ENCODE measurements at regions of chr20 and their contacts with region 1.

Region 1: GRCh38 chr20:52601295-52601971 is 370.7 kb upstream of the TSHZ2 start:
- DNase-seq: peak in 1 of 2 donors; percentile 37
- ATAC-seq: peak in 1 of 2 donors; percentile 54
- H3K4me3 ChIP-seq: no peak overlapping the region
- H3K27ac ChIP-seq: no peak overlapping the region
- H3K4me1 ChIP-seq: no peaks in the 10 kb centered on the region
- H3K27me3 ChIP-seq: no peaks in the 10 kb centered on the region
- CTCF ChIP-seq: no peak
- POLR2A ChIP-seq: no peak

Region 2: GRCh38 chr20:52457826-52458225 is 143.6 kb before region 1 on chr20:
- in situ Hi-C with region 1: no loop called
- intact Hi-C with region 1: no loop called
- DNase-seq: no peak
- ATAC-seq: no peak
- H3K4me3 ChIP-seq: no peak overlapping the region
- H3K27ac ChIP-seq: no peak overlapping the region
- H3K4me1 ChIP-seq: no peaks in the 10 kb centered on the region
- H3K27me3 ChIP-seq: no peaks in the 10 kb centered on the region
- CTCF ChIP-seq: no peak
- POLR2A ChIP-seq: no peak

Region 3: GRCh38 chr20:52469128-52469527 is 132.3 kb before region 1 on chr20:
- in situ Hi-C with region 1: no loop called
- intact Hi-C with region 1: no loop called
- DNase-seq: no peak
- ATAC-seq: no peak
- H3K4me3 ChIP-seq: no peak overlapping the region
- H3K27ac ChIP-seq: no peak overlapping the region
- H3K4me1 ChIP-seq: no peaks in the 10 kb centered on the region
- H3K27me3 ChIP-seq: no peaks in the 10 kb centered on the region
- CTCF ChIP-seq: no peak
- POLR2A ChIP-seq: no peak

Region 4: GRCh38 chr20:54004445-54004844 is 1403.0 kb after region 1 on chr20:
- in situ Hi-C with region 1: no loop called
- intact Hi-C with region 1: loop called (anchors 5 kb)
- DNase-seq: no peak
- ATAC-seq: no peak
- H3K4me3 ChIP-seq: no peak overlapping the region
- H3K27ac ChIP-seq: no peak overlapping the region
- H3K4me1 ChIP-seq: no peaks in the 10 kb centered on the region
- H3K27me3 ChIP-seq: no peaks in the 10 kb centered on the region
- CTCF ChIP-seq: no peak
- POLR2A ChIP-seq: no peak